GM18951 (cell line): ENCODE measurements at regions of chr22 and their contacts with region 1.

Region 1: DNA sequence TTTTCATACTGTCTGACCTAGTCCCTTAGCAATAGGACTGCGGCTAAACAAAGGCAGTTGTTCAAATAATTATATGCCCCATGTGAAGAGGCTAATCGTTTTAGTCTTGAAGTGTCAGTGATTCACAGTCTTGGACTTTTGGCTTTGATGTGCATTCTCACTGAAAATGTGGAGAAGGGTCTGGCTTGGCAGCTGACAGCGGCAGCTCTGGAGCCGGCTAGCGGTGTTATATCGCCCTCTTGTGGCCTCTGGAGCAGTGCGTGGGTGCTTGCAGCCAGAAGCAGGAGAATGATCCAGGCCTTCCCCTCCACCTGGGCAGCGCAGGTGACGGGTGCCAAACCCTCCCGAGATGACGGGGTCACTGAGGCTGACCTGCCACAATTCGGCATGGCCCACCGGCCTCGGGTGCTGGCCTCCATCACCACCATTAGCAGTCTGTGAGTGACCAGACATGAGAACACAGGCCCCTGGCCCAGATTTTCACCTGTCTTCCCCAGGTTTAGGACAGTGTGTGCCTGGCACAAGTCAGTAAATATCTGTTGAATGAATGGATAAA is 90.3 kb upstream of the PITPNB start:
- POLR2A ChIP-seq: no peak

Region 2: DNA sequence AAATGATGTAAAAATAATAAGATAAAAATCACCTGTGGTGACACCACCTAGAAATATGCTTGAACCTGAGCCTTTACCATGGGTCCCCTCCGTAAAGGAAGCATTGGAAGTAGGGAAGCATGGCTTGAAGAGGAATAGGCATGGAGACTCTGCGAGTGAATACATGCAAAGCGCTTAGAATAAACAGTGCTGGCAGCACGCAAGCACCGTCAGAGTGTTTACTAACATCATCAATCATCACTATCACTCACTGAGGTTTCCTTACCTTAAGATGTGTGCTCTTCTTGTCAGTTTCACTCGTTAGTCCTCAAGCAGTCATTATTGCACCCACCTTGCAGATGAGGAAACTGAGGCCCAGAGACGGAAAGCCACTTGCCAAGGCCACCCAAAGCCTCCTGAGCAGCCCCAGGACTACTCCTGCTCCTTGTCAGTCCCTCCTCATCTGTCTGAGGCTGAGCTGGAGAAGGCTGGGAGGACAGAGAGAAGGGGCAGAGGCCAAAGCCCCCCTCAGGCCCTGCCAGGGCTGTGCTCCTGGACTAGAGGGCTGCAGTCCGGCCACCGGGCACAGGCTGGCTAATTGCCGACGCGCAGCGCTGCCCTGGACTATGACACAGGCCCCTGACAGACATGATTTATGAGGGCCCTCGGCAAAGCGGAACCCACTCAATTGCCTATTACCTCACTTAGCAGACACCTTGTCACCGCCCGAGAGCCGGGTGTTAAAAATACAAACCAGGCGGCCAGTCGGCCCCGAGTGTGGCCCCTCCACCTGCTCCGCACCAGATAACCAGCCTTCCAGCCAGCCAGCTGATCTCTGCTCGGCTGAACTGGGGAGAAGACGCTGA is 376.7 kb before region 1 on chr22:
- in situ Hi-C with region 1: no loop called
- POLR2A ChIP-seq: no peak

Region 3: DNA sequence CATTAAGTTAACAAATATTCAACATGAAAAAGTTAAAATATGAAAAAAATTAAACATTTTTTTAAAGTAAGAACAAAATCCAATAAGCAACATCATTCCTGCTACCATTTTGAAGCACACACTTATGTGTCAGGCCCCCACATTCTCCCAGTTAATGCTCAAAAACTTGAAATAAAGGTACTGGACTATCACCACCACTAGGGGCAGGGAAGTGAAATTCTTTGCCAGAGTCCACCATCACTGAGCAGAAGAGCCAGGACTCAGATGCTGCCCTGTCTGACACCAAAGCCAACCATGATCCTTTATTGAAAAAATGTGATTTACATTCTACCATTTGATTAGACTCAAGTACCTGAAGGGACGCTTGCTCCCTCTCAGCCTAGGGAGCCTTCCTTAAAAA is 129.4 kb before region 1 on chr22:
- in situ Hi-C with region 1: loop called (anchors 5 kb)
- POLR2A ChIP-seq: no peak

Region 4: DNA sequence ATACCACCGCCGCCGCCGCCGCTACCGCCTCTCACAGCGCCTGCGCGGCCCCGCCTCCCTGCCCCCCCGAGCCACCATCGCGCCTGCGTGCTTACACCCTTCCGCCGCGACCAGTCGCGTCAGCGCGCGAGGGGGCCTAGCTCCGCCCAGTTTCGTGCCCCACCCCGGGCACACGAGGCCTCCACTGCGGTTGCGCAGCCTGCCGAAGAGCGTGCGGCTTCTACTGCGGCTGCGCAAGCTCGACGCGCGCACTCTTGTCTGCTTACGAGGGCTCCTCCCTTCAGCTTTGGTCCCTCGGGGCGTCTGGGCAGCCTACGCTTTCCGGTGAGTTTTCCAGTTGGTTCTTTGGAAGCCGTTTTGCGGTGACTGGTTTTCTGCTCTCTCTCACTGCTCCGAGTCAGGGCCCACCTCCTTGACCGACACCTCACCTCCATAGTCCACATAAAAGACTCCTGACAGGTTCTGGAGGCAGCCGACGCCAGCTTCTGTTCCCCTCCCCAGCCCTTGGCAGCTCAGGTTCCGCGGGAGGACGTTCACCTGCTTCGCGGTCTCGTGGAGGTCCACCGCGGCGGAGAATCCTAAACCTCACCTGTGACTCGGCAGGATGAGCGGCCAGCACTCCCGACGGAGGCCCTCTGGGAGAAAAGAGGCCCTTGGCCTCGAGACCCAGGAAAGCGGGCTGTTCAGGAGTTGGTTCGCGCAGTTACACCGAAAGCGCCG is 90.0 kb before region 1 on chr22 and contains the start of gene PITPNB:
- in situ Hi-C with region 1: no loop called
- POLR2A ChIP-seq: peak; percentile 82

Region 5: DNA sequence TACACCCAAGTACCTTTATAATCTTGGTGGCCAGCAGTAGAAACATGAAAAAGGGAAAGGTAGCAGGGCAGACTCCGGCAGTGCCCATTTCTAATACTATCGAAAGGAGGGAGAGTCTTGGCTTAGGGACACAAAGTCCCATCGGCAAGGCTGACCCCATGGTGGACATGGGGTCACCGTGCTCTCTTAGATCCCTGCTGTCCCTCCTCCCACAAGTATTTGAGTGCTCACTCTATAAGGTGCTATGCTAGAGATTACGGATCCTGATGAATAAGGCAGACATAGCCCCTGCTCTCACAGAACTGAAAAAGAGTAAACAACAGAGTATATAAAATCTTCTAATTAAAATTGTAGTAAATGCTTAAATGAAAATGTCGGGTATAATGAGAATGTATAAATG is 82.1 kb after region 1 on chr22:
- in situ Hi-C with region 1: no loop called
- POLR2A ChIP-seq: no peak

Region 6: GRCh38 chr22:28155808-28156207 is 146.5 kb after region 1 on chr22:
- in situ Hi-C with region 1: no loop called
- POLR2A ChIP-seq: no peak